ENCODE measurements at regions of chr2 and their contacts with region 1.

Region 1: DNA sequence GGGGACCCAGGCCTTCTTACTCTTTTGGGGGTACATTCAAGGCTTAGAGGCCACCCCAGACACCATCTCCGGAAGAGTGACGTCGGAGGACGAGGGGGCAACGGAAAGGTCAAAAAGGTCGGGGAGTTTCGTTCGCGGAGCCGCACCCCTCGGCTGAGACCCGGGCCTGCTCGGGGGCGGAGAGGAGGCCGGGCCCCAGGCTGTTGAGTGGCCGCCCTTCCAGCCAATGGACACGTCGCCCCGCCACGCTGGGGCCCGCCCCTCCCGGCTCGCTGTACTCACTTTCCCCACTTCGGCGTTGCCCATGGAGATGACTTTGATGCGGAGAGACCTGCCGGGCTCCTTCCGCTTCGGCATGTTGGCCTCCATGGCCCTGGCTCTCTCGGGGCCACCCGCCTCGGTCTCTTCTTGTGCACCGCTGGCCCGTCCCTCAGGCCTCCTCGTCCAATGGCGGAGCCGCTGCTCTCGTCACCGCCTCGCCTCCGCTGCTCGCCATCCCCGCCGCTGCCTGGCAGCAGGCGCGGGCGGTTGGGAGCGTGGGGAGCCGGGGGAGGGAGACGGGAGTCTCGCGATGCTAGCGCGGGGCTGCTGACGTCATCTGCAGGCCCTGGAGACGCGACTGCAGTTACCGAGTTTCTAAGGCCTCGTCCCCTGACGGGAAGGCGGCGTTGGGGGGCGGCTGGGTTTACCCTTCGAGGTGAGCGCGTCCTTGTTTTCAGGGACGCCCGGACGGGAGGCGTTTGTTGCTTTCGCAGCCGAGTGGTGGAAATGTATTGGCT is at the start of gene DNAJC27:
- DNase-seq: peak; percentile 99
- H3K4me3 ChIP-seq: peak within 1 kb of the TSS; percentile 74 to 92 (median 86)
- H3K27ac ChIP-seq: peak within 1 kb of the TSS; percentile 94 to 99
- H3K4me1 ChIP-seq: no peaks in the 10 kb centered on the region
- H3K27me3 ChIP-seq: no peaks in the 10 kb centered on the region
- CTCF ChIP-seq: no peak
- total RNA-seq, gene DNAJC27: 11.4 TPM

Region 2: GRCh38 chr2:24920098-24920808 is 51.5 kb before region 1 on chr2 and contains the start of gene ADCY3:
- intact Hi-C with region 1: no loop called
- DNase-seq: peak; percentile 44 to 86 (median 63)
- H3K4me3 ChIP-seq: peak within 1 kb of the TSS; percentile 44 to 51 (median 50)
- H3K27ac ChIP-seq: peak within 1 kb of the TSS in 1 of 2 donors; percentile 49
- H3K4me1 ChIP-seq: peaks cover 0 to 2% (median 0%) of the 10 kb centered on the region in 3 donors
- H3K27me3 ChIP-seq: no peaks in the 10 kb centered on the region
- CTCF ChIP-seq: no peak
- total RNA-seq, gene ADCY3: 44.6 TPM

Region 3: GRCh38 chr2:25131567-25132298 is 160.0 kb after region 1 on chr2:
- intact Hi-C with region 1: loop called (anchors 10 kb)
- DNase-seq: peak in 4 of 5 donors; percentile 21 to 73 (median 36)
- H3K4me3 ChIP-seq: peak overlapping the region in 1 of 3 donors; percentile 29
- H3K27ac ChIP-seq: no peak overlapping the region
- H3K4me1 ChIP-seq: peaks cover 0 to 5% (median 0%) of the 10 kb centered on the region in 3 donors
- H3K27me3 ChIP-seq: no peaks in the 10 kb centered on the region
- CTCF ChIP-seq: no peak

Region 4: GRCh38 chr2:25257931-25258846 is 286.5 kb after region 1 on chr2:
- intact Hi-C with region 1: no loop called
- DNase-seq: peak in 1 of 5 donors; percentile 45
- H3K4me3 ChIP-seq: no peak overlapping the region
- H3K27ac ChIP-seq: peak overlapping the region in 1 of 2 donors; percentile 3
- H3K4me1 ChIP-seq: peaks cover 0 to 6% (median 0%) of the 10 kb centered on the region in 3 donors
- H3K27me3 ChIP-seq: no peaks in the 10 kb centered on the region
- CTCF ChIP-seq: no peak

Measured in kidney (tissue), 22 donors.